ENCODE measurements at regions of chr11 and their contacts with region 1.

Region 1: DNA sequence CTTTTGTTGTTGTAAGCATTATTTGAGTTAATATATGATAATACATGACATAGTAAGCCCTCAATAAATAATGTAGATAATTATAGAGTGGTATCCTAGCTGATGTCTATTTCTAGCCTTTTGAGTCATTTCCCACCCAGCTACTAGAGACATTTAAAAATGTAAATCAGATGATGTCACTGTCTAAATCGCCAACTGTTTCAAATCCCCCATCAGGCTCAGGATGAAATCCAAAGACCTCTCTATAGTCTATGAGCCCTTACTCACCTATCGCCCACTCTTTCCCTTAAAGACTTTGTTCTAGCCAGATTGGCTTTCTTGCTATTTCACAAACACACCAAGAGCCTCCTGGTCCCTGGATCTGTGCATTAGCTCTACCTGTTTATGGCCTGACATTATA is 135.4 kb upstream of the PLET1 start:
- DNase-seq: no peak
- H3K4me3 ChIP-seq: no peak overlapping the region
- CTCF ChIP-seq: no peak

Region 2: DNA sequence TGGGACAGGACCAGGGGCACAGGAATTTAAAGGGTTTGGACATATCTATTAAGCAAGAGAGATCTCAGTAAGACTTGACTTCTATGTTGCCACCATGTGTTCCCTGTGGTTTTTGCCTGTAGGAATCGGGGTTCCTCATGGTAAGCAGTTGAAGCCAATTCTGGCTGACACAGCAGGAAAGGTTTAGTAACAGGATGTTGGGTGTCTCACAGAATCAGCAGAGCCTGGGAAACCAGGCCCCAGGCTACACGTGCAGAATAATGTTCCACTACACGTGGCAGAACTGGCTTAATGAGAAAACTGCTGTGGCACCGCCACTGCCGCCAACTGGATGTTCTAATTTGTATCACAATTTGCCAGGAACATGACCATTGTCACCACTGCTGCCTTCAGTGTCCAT is 129.2 kb after region 1 on chr11:
- in situ Hi-C with region 1: no loop called
- DNase-seq: peak; percentile 48
- H3K4me3 ChIP-seq: no peak overlapping the region
- CTCF ChIP-seq: no peak

Region 3: DNA sequence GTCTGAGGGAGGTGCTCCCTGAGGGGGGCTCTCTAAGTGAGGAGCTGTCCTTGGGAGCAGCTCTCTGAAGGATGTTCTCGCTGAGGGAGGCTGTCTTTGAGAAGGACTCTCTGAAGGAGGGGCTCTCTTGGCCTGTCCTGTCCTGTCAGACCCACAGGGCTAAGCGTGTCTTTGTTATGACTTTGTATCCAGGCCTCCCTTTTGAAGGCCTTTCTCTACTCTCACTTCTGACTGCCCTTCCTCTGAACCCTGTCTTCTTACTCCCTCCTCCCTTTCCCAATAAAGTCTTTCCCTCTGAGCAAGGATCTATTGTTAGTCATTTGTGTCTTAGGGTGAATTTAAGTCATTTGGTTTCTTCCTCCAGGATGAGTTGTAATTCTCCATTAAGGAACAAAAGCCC is 194.7 kb after region 1 on chr11:
- in situ Hi-C with region 1: loop called (anchors 5 kb)
- DNase-seq: no peak
- H3K4me3 ChIP-seq: no peak overlapping the region
- CTCF ChIP-seq: no peak